Head of caudate nucleus (tissue), 42 donors: ENCODE measurements at regions of chr6 and their contacts with region 1.

Region 1: DNA sequence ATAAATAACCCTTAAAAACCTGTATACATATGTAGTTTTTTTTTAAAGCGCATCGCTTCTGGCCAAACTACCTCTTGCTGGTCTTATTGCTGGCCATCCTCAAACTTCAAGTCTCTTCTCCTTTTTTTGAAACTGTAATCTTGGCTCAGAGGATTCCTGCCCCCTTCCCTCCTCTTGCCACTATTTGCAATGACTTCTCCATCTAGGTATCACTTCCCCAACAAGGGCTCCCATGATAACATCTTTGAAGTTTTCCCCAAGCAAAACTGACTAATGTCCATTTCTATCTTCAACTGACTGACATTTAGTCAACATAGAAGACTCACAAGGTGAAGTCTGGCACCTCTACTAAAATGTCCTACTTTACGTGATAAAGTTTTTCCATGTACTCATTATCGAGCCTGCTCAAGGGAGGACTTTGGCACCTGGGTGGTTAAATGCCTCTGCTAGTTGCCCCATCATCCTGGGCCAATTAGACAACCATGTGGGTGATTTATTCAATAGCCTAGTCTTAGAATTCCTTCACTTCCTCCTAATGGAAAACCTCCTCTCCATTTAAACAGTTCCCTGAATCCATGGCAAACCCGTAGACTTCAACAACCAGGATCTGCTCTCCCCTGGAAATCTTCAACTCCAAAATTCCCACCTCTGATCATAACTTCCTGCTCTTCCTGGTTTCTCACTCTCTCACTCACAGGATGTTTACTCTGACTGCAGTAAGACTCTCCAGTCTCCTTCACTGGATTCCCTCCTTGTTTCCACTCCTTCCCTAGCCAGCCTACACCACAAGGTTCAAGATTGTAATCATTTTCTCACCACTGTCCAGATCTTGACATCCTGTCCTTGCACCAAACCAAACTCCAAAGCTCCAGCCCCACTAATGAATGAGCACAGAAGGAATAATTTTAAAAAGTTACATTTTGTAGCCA is 9.4 kb upstream of the PLAGL1 start:
- DNase-seq: no peak

Region 2: DNA sequence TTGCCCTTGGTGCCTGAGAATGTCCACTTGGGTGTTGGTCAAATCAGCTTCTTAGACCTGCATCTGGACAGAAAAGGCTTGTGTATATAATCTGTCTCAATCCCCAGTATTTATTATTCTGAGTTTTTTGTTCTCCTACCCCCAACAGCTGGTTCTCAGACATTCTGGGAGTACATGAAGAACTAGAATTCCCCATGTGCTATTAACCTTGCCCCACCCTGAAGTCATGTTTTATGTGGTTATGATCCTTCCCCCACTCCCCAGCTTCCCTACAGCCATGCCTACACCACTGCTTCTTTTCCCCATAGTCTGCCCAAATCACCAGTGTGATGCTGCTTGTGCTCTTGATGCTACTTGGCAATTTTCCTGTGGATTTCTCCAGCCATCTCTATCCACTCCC is 723.9 kb before region 1 on chr6:
- intact Hi-C with region 1: no loop called
- DNase-seq: no peak

Region 3: DNA sequence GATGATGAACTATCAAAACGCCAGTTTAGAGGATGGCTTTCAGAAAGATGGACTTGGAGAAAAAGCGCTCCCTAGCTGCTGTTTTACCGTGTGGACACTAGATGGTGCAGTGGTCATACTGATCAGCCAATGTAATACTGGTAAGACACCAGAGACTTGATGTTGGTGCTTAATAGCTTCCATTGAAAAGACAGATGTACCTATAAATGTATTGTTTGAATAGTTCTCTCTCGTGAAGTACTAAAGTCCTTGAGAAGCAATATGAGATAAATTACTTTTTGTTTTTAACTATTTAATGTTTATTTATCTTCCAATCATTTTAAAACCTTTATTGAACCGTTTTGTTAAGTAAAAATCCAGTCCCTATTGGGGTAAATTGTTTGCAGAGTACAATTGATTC is 442.0 kb before region 1 on chr6:
- intact Hi-C with region 1: loop called (anchors 5 kb)
- DNase-seq: peak in 30 of 42 donors; percentile 12 to 82 (median 59)

Region 4: GRCh38 chr6:144053601-144054000 is 36.2 kb after region 1 on chr6:
- intact Hi-C with region 1: no loop called
- DNase-seq: no peak